ENCODE measurements at regions of chr20 and their contacts with region 1.

Region 1: DNA sequence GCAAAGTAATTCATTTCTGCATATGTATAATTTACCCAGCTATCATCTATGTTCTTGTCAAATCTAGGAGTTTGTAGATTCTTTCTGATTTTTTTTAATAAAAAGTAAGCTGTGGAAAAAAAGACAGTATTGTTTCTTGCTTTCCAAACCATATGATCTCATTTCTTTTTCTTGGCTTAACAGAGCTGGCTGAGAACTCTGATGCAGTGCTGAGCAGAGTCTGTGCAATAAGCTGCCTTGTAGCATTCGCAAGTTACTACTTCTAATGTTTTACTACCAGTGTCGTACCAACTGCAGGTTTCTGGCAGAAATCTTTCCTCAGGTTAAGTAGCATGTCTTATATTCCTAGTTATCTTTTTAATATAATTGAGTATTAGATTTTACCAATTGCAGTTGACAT is 15.6 kb downstream of the RRBP1 start:
- DNase-seq: no peak
- CTCF ChIP-seq: no peak

Region 2: DNA sequence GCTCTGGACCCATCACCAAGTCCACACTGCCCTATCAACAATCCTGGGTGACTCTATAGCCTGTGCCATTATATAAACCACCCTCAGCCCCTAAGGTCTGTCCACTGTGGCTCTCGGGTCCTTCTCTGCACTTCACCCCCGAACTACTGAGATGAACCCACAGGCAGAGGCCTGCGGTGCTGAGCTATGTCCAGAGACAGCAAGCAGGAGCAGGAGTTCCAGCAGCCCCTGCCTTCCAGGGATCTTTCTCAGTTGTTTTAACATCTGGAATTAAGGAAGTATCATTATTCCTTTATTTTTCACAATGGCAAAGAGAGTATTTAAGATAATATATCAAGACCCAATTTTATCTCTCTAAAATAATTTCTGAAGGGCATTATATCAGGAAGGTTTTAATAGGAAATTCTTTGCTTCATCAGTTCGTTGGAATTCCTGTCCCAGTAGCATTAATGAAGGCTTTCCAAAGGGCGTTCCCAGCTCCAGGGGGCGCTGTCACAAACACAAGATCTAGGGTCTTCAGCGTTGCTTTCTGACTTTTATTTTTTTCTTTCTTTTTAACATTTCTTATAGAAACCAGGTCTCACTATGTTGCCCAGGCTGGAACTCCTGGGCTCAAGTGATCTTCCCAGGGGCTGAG is 11.7 kb before region 1 on chr20:
- CTCF ChIA-PET with region 1: interaction called, 23 read pairs
- POLR2A ChIA-PET with region 1: no interaction called
- DNase-seq: no peak
- CTCF ChIP-seq: peak; percentile 32